CD8-positive, alpha-beta memory T cell (primary cell): ENCODE measurements at regions of chr17 and their contacts with region 1.

Region 1: GRCh38 chr17:48441231-48441711 is 11.3 kb upstream of the SKAP1 start:
- DNase-seq: peak in 4 of 5 donors; percentile 29 to 85 (median 81)
- H3K4me3 ChIP-seq: peak overlapping the region; percentile 21
- H3K4me3 Mint-ChIP-seq: peak overlapping the region; percentile 17 to 87 (median 78)
- H3K27ac ChIP-seq: peak overlapping the region; percentile 53
- H3K27ac Mint-ChIP-seq: peak overlapping the region; percentile 96 to 100 (median 99)
- H3K4me1 ChIP-seq: peaks cover 96% of the 10 kb centered on the region
- H3K4me1 Mint-ChIP-seq: peaks cover 93 to 96% (median 96%) of the 10 kb centered on the region in 3 donors
- H3K27me3 ChIP-seq: no peaks in the 10 kb centered on the region
- H3K27me3 Mint-ChIP-seq: no peaks in the 10 kb centered on the region

Region 2: GRCh38 chr17:48429638-48430586 is 11.4 kb before region 1 on chr17 and contains the start of gene SKAP1:
- CTCF ChIA-PET with region 1: interaction called, 11 read pairs
- POLR2A ChIA-PET with region 1: interaction called, 16 read pairs
- DNase-seq: peak; percentile 60 to 79 (median 74)
- H3K4me3 ChIP-seq: peak within 1 kb of the TSS; percentile 91
- H3K4me3 Mint-ChIP-seq: peak within 1 kb of the TSS; percentile 91 to 100 (median 96)
- H3K27ac ChIP-seq: peak within 1 kb of the TSS; percentile 86
- H3K27ac Mint-ChIP-seq: peak within 1 kb of the TSS; percentile 93 to 99 (median 98)
- H3K4me1 ChIP-seq: peaks cover 69% of the 10 kb centered on the region
- H3K4me1 Mint-ChIP-seq: peaks cover 74 to 93% (median 92%) of the 10 kb centered on the region in 3 donors
- H3K27me3 ChIP-seq: no peaks in the 10 kb centered on the region
- H3K27me3 Mint-ChIP-seq: no peaks in the 10 kb centered on the region
- total RNA-seq, gene SKAP1: 50.5 to 56.0 TPM

Region 3: DNA sequence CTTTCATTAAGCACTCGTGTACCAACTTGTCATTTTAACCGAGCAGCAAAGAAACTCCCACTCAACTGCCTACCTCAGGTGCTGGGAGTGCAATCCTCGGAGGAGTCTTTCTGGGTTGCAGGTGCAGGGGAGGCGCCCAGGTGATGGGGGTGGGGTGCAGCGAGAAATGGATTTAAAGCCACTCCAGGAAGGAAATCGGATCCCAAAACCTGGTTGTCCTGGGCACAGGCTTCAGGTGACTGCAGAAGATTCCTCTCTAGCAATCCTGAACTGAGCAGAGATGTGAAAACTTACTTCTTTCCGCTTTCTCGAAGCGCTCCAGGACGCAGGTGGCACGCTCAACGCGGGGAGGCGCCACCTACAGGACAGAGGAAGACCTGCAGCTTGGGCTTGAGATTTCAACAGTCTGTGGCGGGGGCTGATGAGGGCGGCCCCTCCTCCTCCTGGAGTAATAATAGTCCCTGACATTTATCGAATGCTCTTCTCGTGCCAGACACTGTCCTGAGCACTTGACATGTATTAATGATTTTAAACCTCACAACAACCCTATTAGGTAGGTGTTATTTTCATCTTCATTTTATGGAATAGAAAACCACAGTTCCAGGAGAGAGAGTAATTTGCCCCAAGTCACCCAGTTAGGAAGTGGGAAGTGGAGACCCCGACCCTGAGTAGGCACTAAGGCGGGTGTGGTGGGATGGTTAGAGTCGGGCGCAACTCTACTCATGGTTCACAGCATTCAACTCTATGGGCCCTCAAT is 16.0 kb after region 1 on chr17:
- CTCF ChIA-PET with region 1: interaction called, 67 read pairs
- POLR2A ChIA-PET with region 1: interaction called, 28 read pairs
- DNase-seq: peak; percentile 59 to 84 (median 77)
- H3K4me3 ChIP-seq: peak overlapping the region; percentile 37
- H3K4me3 Mint-ChIP-seq: peak overlapping the region; percentile 4 to 85 (median 71)
- H3K27ac ChIP-seq: no peak overlapping the region
- H3K27ac Mint-ChIP-seq: peak overlapping the region in 3 of 8 donors; percentile 40 to 59 (median 55)
- H3K4me1 ChIP-seq: peaks cover 53% of the 10 kb centered on the region
- H3K4me1 Mint-ChIP-seq: peaks cover 52 to 57% (median 55%) of the 10 kb centered on the region in 3 donors
- H3K27me3 ChIP-seq: no peaks in the 10 kb centered on the region
- H3K27me3 Mint-ChIP-seq: peaks cover 0 to 1% of the 10 kb centered on the region in 2 donors